Naive thymus-derived CD4-positive, alpha-beta T cell (primary cell): ENCODE measurements at regions of chr1 and their contacts with region 1.

Region 1: GRCh38 chr1:1441002-1441888 is 5.8 kb downstream of the VWA1 start:
- DNase-seq: peak in 8 of 9 donors; percentile 26 to 72 (median 48)
- ATAC-seq: peak; percentile 89
- H3K4me3 ChIP-seq: no peak overlapping the region
- H3K4me3 Mint-ChIP-seq: peak overlapping the region in 1 of 10 donors; percentile 23
- H3K27ac ChIP-seq: no peak overlapping the region
- H3K27ac Mint-ChIP-seq: no peak overlapping the region
- H3K4me1 ChIP-seq: peaks cover 0 to 4% of the 10 kb centered on the region in 2 donors
- H3K4me1 Mint-ChIP-seq: peaks cover 0 to 6% (median 0%) of the 10 kb centered on the region in 7 donors
- H3K27me3 ChIP-seq: peaks cover 0 to 18% of the 10 kb centered on the region in 2 donors
- H3K27me3 Mint-ChIP-seq: peaks cover 0 to 4% (median 2%) of the 10 kb centered on the region in 5 donors

Region 2: DNA sequence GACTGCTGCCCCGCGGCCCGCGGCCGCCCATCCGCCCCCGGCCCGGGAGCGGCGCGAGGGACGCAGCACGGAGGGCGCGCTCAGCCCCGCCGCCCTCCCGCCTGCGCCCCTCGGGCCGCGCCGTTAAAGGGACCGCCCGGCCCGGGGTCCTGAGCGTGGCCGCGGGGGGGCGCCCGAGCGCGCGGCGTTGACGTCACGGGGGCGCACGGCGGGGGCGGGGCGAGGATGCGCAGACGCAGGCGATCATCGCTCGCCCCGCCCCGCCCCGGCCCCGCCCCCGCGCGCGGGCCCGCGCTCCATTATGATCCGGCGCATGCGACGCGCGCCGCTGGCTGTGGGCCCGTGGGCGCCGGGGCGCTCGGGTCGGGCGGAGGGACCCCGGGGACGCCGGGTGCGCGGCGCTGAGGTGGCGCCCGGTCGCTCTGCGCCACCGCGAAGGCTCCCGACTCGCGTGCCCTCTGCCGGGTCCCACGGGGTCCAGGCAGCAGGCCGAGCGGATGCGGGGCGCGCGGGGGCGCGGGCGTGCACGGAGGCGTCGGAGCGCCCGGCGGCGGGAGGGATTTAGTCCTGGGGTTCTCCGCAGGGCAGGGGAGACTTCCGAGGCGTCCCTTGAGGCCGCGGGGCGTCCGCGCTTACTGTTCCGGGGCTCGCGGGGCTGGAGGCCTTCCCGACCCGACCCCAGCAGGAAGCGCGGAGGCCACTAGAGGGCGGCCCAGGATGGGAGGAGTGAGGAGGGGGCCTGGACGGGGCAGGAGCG is 91.8 kb before region 1 on chr1 and contains the start of gene DVL1:
- CTCF ChIA-PET with region 1: interaction called, 3 read pairs
- POLR2A ChIA-PET with region 1: no interaction called
- intact Hi-C with region 1: loop called in 1 of 2 experiments (anchors 1 kb)
- DNase-seq: peak; percentile 51 to 86 (median 78)
- ATAC-seq: peak; percentile 94
- H3K4me3 ChIP-seq: peak within 1 kb of the TSS; percentile 56
- H3K4me3 Mint-ChIP-seq: peak within 1 kb of the TSS; percentile 40 to 85 (median 76)
- H3K27ac ChIP-seq: peak within 1 kb of the TSS; percentile 92
- H3K27ac Mint-ChIP-seq: peak within 1 kb of the TSS in 5 of 9 donors; percentile 34 to 76 (median 56)
- H3K4me1 ChIP-seq: peaks cover 0 to 19% of the 10 kb centered on the region in 2 donors
- H3K4me1 Mint-ChIP-seq: peaks cover 13 to 34% (median 29%) of the 10 kb centered on the region in 7 donors
- H3K27me3 ChIP-seq: peaks cover 0 to 6% of the 10 kb centered on the region in 2 donors
- H3K27me3 Mint-ChIP-seq: peaks cover 0 to 24% (median 9%) of the 10 kb centered on the region in 5 donors
- total RNA-seq, gene DVL1: 40.2 to 54.9 (median 45.9) TPM

Region 3: DNA sequence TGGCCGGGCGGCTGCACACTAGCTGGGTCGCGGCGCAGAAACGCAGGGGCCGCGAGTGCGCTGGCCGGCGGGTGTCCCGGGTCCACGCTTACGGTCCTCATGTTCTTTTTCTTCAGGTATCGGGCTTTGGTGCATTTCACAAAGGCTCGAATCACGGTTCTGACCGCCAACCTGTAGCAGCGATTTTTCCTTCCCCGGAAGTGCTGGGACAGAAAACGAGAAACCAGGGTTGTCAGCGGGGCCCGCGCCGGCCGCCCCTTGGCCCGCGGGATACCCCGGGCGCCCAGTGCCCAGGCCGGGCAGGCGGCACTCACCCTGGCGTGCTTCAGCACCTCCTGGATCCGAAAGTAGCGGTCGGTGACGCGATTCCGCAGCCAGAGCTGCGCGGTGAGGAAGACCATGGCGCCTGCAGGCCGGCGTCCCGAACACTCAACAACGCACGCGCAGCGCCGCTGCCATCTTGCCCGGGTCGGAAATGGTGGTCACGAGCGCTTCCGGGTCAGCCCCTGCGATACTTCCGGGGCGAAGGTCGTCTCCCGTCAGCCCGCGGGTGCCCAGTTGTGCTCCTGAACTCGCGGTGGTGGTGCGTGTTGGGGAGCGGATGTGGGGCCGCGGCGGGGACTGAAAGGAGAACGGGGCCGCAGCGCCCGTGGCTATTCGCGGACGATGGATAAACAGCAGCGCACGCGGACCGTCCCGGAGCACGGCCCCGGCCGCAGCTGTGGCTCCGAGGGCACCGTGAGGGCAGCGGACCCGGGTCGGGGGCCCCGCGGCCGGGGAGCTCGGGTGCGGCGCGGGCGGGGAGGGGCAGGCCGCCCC is 34.2 kb before region 1 on chr1 and contains the start of gene MRPL20:
- CTCF ChIA-PET with region 1: interaction called, 3 read pairs
- POLR2A ChIA-PET with region 1: interaction called, 4 read pairs
- intact Hi-C with region 1: loop called in 1 of 2 experiments (anchors 2 kb)
- DNase-seq: peak; percentile 88 to 96 (median 94)
- ATAC-seq: peak; percentile 97
- H3K4me3 ChIP-seq: peak within 1 kb of the TSS; percentile 89
- H3K4me3 Mint-ChIP-seq: peak within 1 kb of the TSS; percentile 83 to 96 (median 93)
- H3K27ac ChIP-seq: peak within 1 kb of the TSS; percentile 89
- H3K27ac Mint-ChIP-seq: peak within 1 kb of the TSS; percentile 90 to 97 (median 94)
- H3K4me1 ChIP-seq: peaks cover 19 to 20% of the 10 kb centered on the region in 2 donors
- H3K4me1 Mint-ChIP-seq: peaks cover 0 to 59% (median 35%) of the 10 kb centered on the region in 7 donors
- H3K27me3 ChIP-seq: no peaks in the 10 kb centered on the region
- H3K27me3 Mint-ChIP-seq: peaks cover 0 to 1% (median 0%) of the 10 kb centered on the region in 5 donors
- total RNA-seq, gene MRPL20: 91.2 to 135 (median 122) TPM

Region 4: GRCh38 chr1:1451696-1452367 is 10.6 kb after region 1 on chr1:
- CTCF ChIA-PET with region 1: no interaction called
- POLR2A ChIA-PET with region 1: no interaction called
- intact Hi-C with region 1: no loop called
- DNase-seq: no peak
- ATAC-seq: no peak
- H3K4me3 ChIP-seq: no peak overlapping the region
- H3K4me3 Mint-ChIP-seq: no peak overlapping the region
- H3K27ac ChIP-seq: no peak overlapping the region
- H3K27ac Mint-ChIP-seq: no peak overlapping the region
- H3K4me1 ChIP-seq: no peaks in the 10 kb centered on the region
- H3K4me1 Mint-ChIP-seq: no peaks in the 10 kb centered on the region
- H3K27me3 ChIP-seq: no peaks in the 10 kb centered on the region
- H3K27me3 Mint-ChIP-seq: peaks cover 0 to 6% (median 0%) of the 10 kb centered on the region in 5 donors

Region 5: GRCh38 chr1:2049718-2050427 is 608.6 kb after region 1 on chr1 and contains the start of gene PRKCZ:
- CTCF ChIA-PET with region 1: no interaction called
- POLR2A ChIA-PET with region 1: no interaction called
- intact Hi-C with region 1: no loop called
- DNase-seq: peak; percentile 76 to 96 (median 92)
- ATAC-seq: peak; percentile 99
- H3K4me3 ChIP-seq: peak within 1 kb of the TSS; percentile 73
- H3K4me3 Mint-ChIP-seq: peak within 1 kb of the TSS; percentile 64 to 89 (median 80)
- H3K27ac ChIP-seq: peak within 1 kb of the TSS; percentile 70
- H3K27ac Mint-ChIP-seq: peak within 1 kb of the TSS in 6 of 9 donors; percentile 5 to 82 (median 50)
- H3K4me1 ChIP-seq: peaks cover 7 to 14% of the 10 kb centered on the region in 2 donors
- H3K4me1 Mint-ChIP-seq: peaks cover 10 to 35% (median 22%) of the 10 kb centered on the region in 7 donors
- H3K27me3 ChIP-seq: no peaks in the 10 kb centered on the region
- H3K27me3 Mint-ChIP-seq: peaks cover 0 to 45% (median 5%) of the 10 kb centered on the region in 5 donors
- total RNA-seq, gene PRKCZ: 3.6 to 29.6 (median 24.5) TPM